ENCODE measurements at regions of chr4 and their contacts with region 1.

Region 1: GRCh38 chr4:145487631-145488030 is 6.0 kb downstream of the SMAD1 start:
- DNase-seq: peak; percentile 67
- H3K4me3 Mint-ChIP-seq: no peak overlapping the region
- H3K27ac Mint-ChIP-seq: no peak overlapping the region
- H3K4me1 Mint-ChIP-seq: peaks cover 4% of the 10 kb centered on the region
- H3K27me3 Mint-ChIP-seq: peaks cover 30% of the 10 kb centered on the region

Region 2: GRCh38 chr4:145299380-145300076 is 188.1 kb before region 1 on chr4:
- intact Hi-C with region 1: loop called (anchors 1 kb)
- DNase-seq: peak; percentile 74
- H3K4me3 Mint-ChIP-seq: no peak overlapping the region
- H3K27ac Mint-ChIP-seq: no peak overlapping the region
- H3K4me1 Mint-ChIP-seq: peaks cover 11% of the 10 kb centered on the region
- H3K27me3 Mint-ChIP-seq: peaks cover 14% of the 10 kb centered on the region

Region 3: GRCh38 chr4:145320294-145320693 is 167.3 kb before region 1 on chr4:
- intact Hi-C with region 1: no loop called
- DNase-seq: no peak
- H3K4me3 Mint-ChIP-seq: no peak overlapping the region
- H3K27ac Mint-ChIP-seq: no peak overlapping the region
- H3K4me1 Mint-ChIP-seq: no peaks in the 10 kb centered on the region
- H3K27me3 Mint-ChIP-seq: peaks cover 9% of the 10 kb centered on the region